ENCODE measurements at regions of chr2 and their contacts with region 1.

Region 1: DNA sequence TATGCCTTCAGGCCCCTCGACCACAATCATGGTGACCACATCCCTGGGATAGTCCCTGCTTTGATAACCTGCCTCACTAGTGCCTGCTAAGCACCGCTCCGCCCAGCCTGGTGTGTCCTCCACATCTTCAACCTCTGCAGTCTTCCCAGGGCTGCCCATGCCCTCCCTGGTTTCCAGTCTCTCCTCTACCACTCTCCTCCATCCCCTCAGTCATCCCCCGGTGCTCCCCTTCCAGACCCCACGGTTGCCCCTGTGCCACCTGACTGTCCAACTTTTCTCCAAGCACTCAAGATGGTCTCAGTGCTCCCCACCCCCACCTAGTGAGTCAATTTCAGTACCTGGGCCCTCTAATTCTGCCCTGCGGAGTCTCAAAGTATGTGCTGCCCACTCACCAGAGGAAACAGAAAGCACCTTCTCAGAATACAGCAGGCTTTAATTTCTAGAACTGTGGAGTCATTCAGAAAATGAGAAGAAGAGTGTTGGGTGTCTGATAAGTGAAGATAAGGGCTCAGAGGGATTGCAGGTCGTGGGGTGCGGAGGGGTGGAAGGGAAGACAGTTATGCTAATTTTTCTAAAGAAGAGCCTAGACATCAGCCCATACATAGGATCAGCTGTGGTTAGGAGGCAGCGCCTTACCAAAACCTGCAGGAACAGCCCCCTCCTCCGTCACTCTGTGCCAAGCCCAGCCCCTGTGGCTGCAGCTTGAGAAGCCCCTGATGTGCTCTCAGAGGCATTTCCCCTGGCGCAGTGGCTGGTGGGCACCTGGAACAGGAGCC is 53.6 kb upstream of the CAB39 start:
- DNase-seq: peak in 2 of 5 donors; percentile 41 to 73
- H3K4me3 ChIP-seq: peak overlapping the region; percentile 20 to 45
- H3K4me3 Mint-ChIP-seq: peak overlapping the region; percentile 47 to 84 (median 78)
- H3K27ac ChIP-seq: peak overlapping the region; percentile 54
- H3K27ac Mint-ChIP-seq: peak overlapping the region; percentile 70 to 96 (median 92)
- H3K4me1 ChIP-seq: peaks cover 89% of the 10 kb centered on the region
- H3K4me1 Mint-ChIP-seq: peaks cover 64 to 94% (median 79%) of the 10 kb centered on the region in 4 donors
- H3K27me3 ChIP-seq: no peaks in the 10 kb centered on the region
- H3K27me3 Mint-ChIP-seq: no peaks in the 10 kb centered on the region

Region 2: DNA sequence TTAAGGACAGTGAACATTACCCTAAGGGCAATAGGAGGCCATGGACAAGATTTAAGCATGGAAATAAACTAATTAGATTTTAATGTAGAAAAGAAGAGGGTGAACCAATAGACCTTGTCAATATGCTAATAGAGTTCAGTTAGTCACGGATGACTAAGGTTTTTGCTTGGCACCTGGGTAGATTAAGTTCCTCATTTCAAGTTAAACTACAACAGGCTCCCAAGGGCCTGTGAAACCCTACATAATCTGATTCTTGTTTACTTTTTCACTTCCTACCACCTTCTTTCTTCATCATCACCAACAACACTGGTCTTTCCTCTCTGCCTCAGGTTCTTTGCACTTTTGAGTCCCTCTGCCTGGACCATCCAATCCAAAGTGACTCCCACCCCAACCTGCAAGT is 454.0 kb before region 1 on chr2:
- CTCF ChIA-PET with region 1: no interaction called
- POLR2A ChIA-PET with region 1: no interaction called
- intact Hi-C with region 1: no loop called
- DNase-seq: no peak
- H3K4me3 ChIP-seq: no peak overlapping the region
- H3K4me3 Mint-ChIP-seq: peak overlapping the region in 1 of 8 donors; percentile 63
- H3K27ac ChIP-seq: no peak overlapping the region
- H3K27ac Mint-ChIP-seq: peak overlapping the region; percentile 3 to 86 (median 69)
- H3K4me1 ChIP-seq: peaks cover 19% of the 10 kb centered on the region
- H3K4me1 Mint-ChIP-seq: peaks cover 17 to 22% (median 21%) of the 10 kb centered on the region in 4 donors
- H3K27me3 ChIP-seq: no peaks in the 10 kb centered on the region
- H3K27me3 Mint-ChIP-seq: no peaks in the 10 kb centered on the region

Region 3: DNA sequence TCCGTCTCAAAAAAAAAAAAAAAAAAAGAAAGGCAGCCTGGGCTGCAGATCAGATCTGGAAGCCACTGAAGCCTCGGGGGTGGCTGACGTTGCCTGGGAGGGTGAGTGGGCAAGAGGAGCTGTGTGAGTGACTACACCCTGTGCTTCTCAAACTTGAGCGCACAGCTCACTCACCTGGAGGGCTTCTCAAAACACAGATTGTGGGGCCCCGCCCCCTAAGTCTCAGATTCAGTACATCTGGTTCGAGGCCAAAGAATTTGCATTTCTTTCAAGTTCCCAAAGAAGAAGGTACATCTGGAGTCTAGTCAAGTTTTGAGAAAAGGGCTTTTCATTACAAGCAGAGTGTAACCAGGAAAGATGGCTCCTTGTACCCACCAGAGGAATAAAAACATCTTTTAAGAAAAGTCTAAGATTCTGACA is 44.1 kb before region 1 on chr2:
- CTCF ChIA-PET with region 1: no interaction called
- POLR2A ChIA-PET with region 1: no interaction called
- intact Hi-C with region 1: no loop called
- DNase-seq: no peak
- H3K4me3 ChIP-seq: no peak overlapping the region
- H3K4me3 Mint-ChIP-seq: no peak overlapping the region
- H3K27ac ChIP-seq: no peak overlapping the region
- H3K27ac Mint-ChIP-seq: no peak overlapping the region
- H3K4me1 ChIP-seq: peaks cover 25% of the 10 kb centered on the region
- H3K4me1 Mint-ChIP-seq: peaks cover 9 to 19% (median 16%) of the 10 kb centered on the region in 4 donors
- H3K27me3 ChIP-seq: no peaks in the 10 kb centered on the region
- H3K27me3 Mint-ChIP-seq: no peaks in the 10 kb centered on the region

Region 4: GRCh38 chr2:230643576-230644291 is 15.3 kb before region 1 on chr2:
- CTCF ChIA-PET with region 1: interaction called, 5 read pairs
- POLR2A ChIA-PET with region 1: interaction called, 41 read pairs
- intact Hi-C with region 1: loop called (anchors 2 kb)
- DNase-seq: peak; percentile 44 to 65 (median 53)
- H3K4me3 ChIP-seq: peak overlapping the region; percentile 8 to 30
- H3K4me3 Mint-ChIP-seq: peak overlapping the region; percentile 34 to 84 (median 71)
- H3K27ac ChIP-seq: peak overlapping the region; percentile 51
- H3K27ac Mint-ChIP-seq: peak overlapping the region; percentile 85 to 97 (median 95)
- H3K4me1 ChIP-seq: peaks cover 33% of the 10 kb centered on the region
- H3K4me1 Mint-ChIP-seq: peaks cover 11 to 35% (median 25%) of the 10 kb centered on the region in 4 donors
- H3K27me3 ChIP-seq: no peaks in the 10 kb centered on the region
- H3K27me3 Mint-ChIP-seq: no peaks in the 10 kb centered on the region

Region 5: DNA sequence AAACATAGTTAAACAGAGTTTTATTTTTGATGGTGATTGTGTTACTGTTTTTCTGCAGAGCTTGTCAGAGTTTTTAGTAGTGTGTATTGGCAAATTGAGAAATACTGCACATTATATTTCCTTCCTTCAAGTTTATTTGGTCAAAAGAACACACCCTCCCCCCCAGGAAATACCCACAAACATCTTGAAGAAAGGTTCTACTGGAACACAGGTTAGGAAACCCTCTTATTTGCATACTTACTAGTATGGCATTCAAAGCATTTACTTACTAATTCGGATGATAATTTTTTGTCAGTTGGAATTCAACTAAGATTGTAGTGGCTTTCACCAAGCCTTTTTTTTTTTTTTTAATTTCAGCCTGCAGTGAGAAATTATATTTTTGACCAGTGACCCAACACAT is 62.6 kb after region 1 on chr2:
- CTCF ChIA-PET with region 1: no interaction called
- POLR2A ChIA-PET with region 1: interaction called, 14 read pairs
- intact Hi-C with region 1: no loop called
- DNase-seq: peak in 4 of 5 donors; percentile 14 to 38 (median 23)
- H3K4me3 ChIP-seq: no peak overlapping the region
- H3K4me3 Mint-ChIP-seq: peak overlapping the region; percentile 49 to 80 (median 63)
- H3K27ac ChIP-seq: peak overlapping the region; percentile 34
- H3K27ac Mint-ChIP-seq: peak overlapping the region; percentile 14 to 86 (median 78)
- H3K4me1 ChIP-seq: peaks cover 98% of the 10 kb centered on the region
- H3K4me1 Mint-ChIP-seq: peaks cover 64 to 92% (median 80%) of the 10 kb centered on the region in 4 donors
- H3K27me3 ChIP-seq: no peaks in the 10 kb centered on the region
- H3K27me3 Mint-ChIP-seq: no peaks in the 10 kb centered on the region

Region 6: GRCh38 chr2:230793572-230794359 is 134.7 kb after region 1 on chr2:
- CTCF ChIA-PET with region 1: interaction called, 4 read pairs
- POLR2A ChIA-PET with region 1: interaction called, 10 read pairs
- intact Hi-C with region 1: no loop called
- DNase-seq: peak; percentile 65 to 92 (median 71)
- H3K4me3 ChIP-seq: no peak overlapping the region
- H3K4me3 Mint-ChIP-seq: peak overlapping the region; percentile 63 to 82 (median 75)
- H3K27ac ChIP-seq: peak overlapping the region; percentile 61
- H3K27ac Mint-ChIP-seq: peak overlapping the region in 6 of 7 donors; percentile 88 to 96 (median 92)
- H3K4me1 ChIP-seq: peaks cover 72% of the 10 kb centered on the region
- H3K4me1 Mint-ChIP-seq: peaks cover 41 to 63% (median 46%) of the 10 kb centered on the region in 4 donors
- H3K27me3 ChIP-seq: no peaks in the 10 kb centered on the region
- H3K27me3 Mint-ChIP-seq: no peaks in the 10 kb centered on the region